ENCODE measurements at regions of chr14 and their contacts with region 1.

Region 1: DNA sequence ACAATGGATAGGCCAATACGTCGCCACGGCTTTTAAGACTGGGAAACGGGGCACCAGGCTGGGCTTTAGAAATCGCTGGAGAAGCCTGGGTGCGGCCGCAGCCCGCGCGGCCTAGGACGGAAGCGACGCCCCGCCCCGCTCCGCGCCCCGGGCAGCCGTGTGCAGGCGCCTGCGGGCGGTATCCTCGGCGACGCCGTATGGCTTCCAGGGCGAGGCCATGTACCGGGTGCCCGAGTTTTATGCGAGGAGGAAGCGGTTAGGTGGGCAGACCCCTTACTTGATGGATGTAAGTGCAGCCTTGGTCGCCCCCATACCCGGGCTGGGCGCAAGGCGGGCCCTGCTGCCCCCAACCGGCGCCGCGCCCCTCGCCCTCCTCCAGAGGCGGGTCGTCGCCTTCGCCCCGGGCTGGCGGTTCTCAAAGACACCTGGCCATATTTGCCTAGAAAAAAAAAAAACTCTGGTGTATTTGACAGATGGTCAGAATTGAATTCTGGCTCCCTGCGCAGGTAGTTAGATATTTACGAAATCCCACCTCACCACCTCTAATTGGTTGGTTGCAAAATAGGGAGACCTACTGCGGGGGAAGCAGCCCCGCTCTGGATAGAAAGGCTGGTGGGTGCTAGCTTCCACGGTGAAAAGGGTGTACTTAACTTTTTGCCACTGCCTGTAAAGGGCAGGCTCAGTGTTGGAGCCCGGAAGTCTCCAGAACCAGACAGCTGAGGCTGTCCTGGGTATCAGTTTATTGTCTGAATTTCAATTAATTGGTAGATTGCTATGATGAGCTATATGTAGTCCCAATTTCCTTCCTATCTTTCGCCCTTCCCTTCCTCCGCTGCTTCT is at the start of gene PPP1R36:
- DNase-seq: peak in 1 of 2 experiments; percentile 74
- H3K4me3 ChIP-seq: peak within 1 kb of the TSS; percentile 58
- H3K4me3 Mint-ChIP-seq: peak within 1 kb of the TSS; percentile 70
- H3K27ac Mint-ChIP-seq: peak within 1 kb of the TSS; percentile 29
- H3K4me1 ChIP-seq: peaks cover 17% of the 10 kb centered on the region
- H3K4me1 Mint-ChIP-seq: peaks cover 23% of the 10 kb centered on the region
- H3K27me3 ChIP-seq: no peaks in the 10 kb centered on the region
- H3K27me3 Mint-ChIP-seq: no peaks in the 10 kb centered on the region
- CTCF ChIP-seq: peak in 1 of 2 experiments; percentile 13
- total RNA-seq, gene PPP1R36: 2.3 and 2.9 TPM in 2 replicates

Region 2: GRCh38 chr14:64363265-64363846 is 186.6 kb before region 1 on chr14:
- CTCF ChIA-PET with region 1: no interaction called
- POLR2A ChIA-PET with region 1: no interaction called
- intact Hi-C with region 1: no loop called
- DNase-seq: no peak
- H3K4me3 ChIP-seq: no peak overlapping the region
- H3K4me3 Mint-ChIP-seq: no peak overlapping the region
- H3K27ac Mint-ChIP-seq: no peak overlapping the region
- H3K4me1 ChIP-seq: no peaks in the 10 kb centered on the region
- H3K4me1 Mint-ChIP-seq: no peaks in the 10 kb centered on the region
- H3K27me3 ChIP-seq: no peaks in the 10 kb centered on the region
- H3K27me3 Mint-ChIP-seq: no peaks in the 10 kb centered on the region
- CTCF ChIP-seq: no peak

Region 3: DNA sequence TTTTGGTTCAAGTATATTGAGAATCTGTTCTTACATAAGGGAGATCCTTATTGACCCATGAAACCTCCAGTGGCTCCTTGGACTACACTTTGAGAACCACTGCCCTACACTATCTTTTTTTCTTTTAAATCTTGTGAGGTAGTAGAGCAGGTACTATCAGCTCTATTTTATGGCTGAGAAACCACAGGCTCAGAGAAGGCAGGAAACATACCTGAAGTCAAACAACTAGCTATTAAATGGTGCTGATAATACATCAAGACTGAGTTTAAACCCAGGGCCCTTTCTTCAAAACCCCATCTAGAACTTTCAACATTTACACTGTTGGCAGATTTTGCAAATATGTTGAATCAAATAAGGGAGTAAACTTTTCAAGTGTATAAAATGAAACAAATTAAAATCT is 53.2 kb before region 1 on chr14:
- CTCF ChIA-PET with region 1: no interaction called
- POLR2A ChIA-PET with region 1: no interaction called
- intact Hi-C with region 1: no loop called
- DNase-seq: no peak
- H3K4me3 ChIP-seq: no peak overlapping the region
- H3K4me3 Mint-ChIP-seq: no peak overlapping the region
- H3K27ac Mint-ChIP-seq: no peak overlapping the region
- H3K4me1 ChIP-seq: peaks cover 8% of the 10 kb centered on the region
- H3K4me1 Mint-ChIP-seq: peaks cover 6% of the 10 kb centered on the region
- H3K27me3 ChIP-seq: no peaks in the 10 kb centered on the region
- H3K27me3 Mint-ChIP-seq: no peaks in the 10 kb centered on the region
- CTCF ChIP-seq: no peak

Region 4: DNA sequence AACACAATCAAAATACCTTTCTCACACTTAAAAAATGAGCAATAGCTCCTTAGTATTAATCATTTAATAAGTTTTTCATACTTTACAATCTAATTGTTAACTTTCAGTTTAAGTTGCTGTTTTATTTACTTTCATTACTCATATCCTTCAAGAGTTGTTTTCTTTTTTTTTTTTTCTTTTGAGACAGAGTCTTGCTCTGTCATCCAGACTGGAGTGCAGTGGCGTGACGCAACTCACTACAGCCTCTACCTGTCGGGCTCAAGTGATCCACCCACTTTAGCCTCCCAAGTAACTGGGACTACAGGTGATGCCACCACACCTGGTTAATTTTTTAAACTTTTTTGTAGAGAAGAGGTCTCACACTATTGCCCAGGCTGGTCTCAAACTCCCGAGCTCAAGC is 29.3 kb before region 1 on chr14:
- CTCF ChIA-PET with region 1: no interaction called
- POLR2A ChIA-PET with region 1: no interaction called
- intact Hi-C with region 1: no loop called
- DNase-seq: no peak
- H3K4me3 ChIP-seq: no peak overlapping the region
- H3K4me3 Mint-ChIP-seq: no peak overlapping the region
- H3K27ac Mint-ChIP-seq: no peak overlapping the region
- H3K4me1 ChIP-seq: no peaks in the 10 kb centered on the region
- H3K4me1 Mint-ChIP-seq: no peaks in the 10 kb centered on the region
- H3K27me3 ChIP-seq: no peaks in the 10 kb centered on the region
- H3K27me3 Mint-ChIP-seq: no peaks in the 10 kb centered on the region
- CTCF ChIP-seq: no peak

Region 5: GRCh38 chr14:64562431-64562830 is 12.4 kb after region 1 on chr14:
- CTCF ChIA-PET with region 1: no interaction called
- POLR2A ChIA-PET with region 1: no interaction called
- intact Hi-C with region 1: loop called (anchors 1 kb)
- DNase-seq: peak in 1 of 2 experiments; percentile 48
- H3K4me3 ChIP-seq: no peak overlapping the region
- H3K4me3 Mint-ChIP-seq: no peak overlapping the region
- H3K27ac Mint-ChIP-seq: no peak overlapping the region
- H3K4me1 ChIP-seq: no peaks in the 10 kb centered on the region
- H3K4me1 Mint-ChIP-seq: no peaks in the 10 kb centered on the region
- H3K27me3 ChIP-seq: no peaks in the 10 kb centered on the region
- H3K27me3 Mint-ChIP-seq: no peaks in the 10 kb centered on the region
- CTCF ChIP-seq: no peak

Region 6: DNA sequence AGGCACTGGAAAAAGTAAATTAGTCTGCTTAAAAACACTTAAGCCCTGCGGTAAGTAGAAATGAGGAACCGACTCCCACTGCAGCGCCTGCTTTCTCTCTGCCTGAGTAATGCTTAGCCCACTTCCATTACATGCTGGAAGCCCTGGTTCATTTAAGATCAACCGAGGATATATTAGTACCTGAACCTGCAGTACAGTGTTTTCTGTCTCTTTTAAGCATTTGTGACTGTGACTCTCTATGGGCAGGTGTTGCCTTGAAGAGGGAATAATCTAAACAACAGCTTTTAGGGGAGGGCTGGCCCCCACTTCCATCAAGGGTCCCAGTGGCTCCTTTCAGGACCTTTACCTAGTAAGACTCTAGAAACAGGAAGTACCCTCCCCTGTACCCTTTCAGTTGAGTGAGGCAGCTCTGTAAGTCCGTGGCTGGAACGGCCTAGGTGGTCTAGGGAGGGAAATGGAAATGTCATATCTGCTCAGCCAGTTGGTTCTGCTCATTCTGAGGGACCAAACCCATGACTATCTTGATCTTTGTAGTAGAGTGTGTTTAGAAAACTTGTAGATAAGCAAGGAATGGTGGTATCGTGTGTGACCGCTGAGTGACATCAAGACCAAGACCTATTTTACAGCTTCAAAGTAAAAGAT is 492.9 kb after region 1 on chr14:
- CTCF ChIA-PET with region 1: no interaction called
- POLR2A ChIA-PET with region 1: no interaction called
- intact Hi-C with region 1: no loop called
- DNase-seq: no peak
- H3K4me3 ChIP-seq: no peak overlapping the region
- H3K4me3 Mint-ChIP-seq: no peak overlapping the region
- H3K27ac Mint-ChIP-seq: no peak overlapping the region
- H3K4me1 ChIP-seq: no peaks in the 10 kb centered on the region
- H3K4me1 Mint-ChIP-seq: peaks cover 13% of the 10 kb centered on the region
- H3K27me3 ChIP-seq: no peaks in the 10 kb centered on the region
- H3K27me3 Mint-ChIP-seq: no peaks in the 10 kb centered on the region
- CTCF ChIP-seq: no peak

Measured in Caco-2 (cell line).